Heart left ventricle (tissue), 16 donors: ENCODE measurements at regions of chr2 and their contacts with region 1.

Region 1: DNA sequence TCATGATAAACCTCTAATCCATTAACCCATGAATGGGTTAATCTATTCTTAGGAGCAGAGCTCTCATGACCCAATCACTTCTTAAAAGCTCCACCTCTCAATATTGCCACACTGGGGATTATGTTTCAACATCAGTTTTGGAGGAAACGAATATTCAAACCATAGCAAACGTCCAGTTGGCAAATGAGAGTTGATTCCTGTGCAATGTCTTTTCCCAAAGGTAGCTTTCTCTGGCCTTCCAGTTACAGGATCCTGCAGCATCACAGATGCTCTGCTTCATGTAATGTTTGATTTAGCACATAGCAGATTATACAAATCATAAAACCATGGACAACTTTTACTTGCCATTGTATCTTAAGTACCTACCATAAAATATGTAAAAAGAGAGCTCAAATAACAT is 481.0 kb downstream of the TNS1 start:
- DNase-seq: no peak
- ATAC-seq: peak in 1 of 4 donors; percentile 16
- H3K4me3 ChIP-seq: no peak overlapping the region
- H3K27ac ChIP-seq: peak overlapping the region in 1 of 12 donors; percentile 39
- H3K4me1 ChIP-seq: peaks cover 0 to 15% (median 4%) of the 10 kb centered on the region in 12 donors
- H3K27me3 ChIP-seq: no peaks in the 10 kb centered on the region
- CTCF ChIP-seq: no peak
- POLR2A ChIP-seq: no peak

Region 2: GRCh38 chr2:217636991-217637944 is 115.4 kb after region 1 on chr2:
- intact Hi-C with region 1: loop called in 1 of 10 experiments (anchors 5 kb)
- DNase-seq: no peak
- ATAC-seq: peak in 2 of 4 donors; percentile 36 to 42
- H3K4me3 ChIP-seq: no peak overlapping the region
- H3K27ac ChIP-seq: no peak overlapping the region
- H3K4me1 ChIP-seq: peaks cover 0 to 34% (median 10%) of the 10 kb centered on the region in 12 donors
- H3K27me3 ChIP-seq: no peaks in the 10 kb centered on the region
- CTCF ChIP-seq: no peak
- POLR2A ChIP-seq: no peak

Region 3: DNA sequence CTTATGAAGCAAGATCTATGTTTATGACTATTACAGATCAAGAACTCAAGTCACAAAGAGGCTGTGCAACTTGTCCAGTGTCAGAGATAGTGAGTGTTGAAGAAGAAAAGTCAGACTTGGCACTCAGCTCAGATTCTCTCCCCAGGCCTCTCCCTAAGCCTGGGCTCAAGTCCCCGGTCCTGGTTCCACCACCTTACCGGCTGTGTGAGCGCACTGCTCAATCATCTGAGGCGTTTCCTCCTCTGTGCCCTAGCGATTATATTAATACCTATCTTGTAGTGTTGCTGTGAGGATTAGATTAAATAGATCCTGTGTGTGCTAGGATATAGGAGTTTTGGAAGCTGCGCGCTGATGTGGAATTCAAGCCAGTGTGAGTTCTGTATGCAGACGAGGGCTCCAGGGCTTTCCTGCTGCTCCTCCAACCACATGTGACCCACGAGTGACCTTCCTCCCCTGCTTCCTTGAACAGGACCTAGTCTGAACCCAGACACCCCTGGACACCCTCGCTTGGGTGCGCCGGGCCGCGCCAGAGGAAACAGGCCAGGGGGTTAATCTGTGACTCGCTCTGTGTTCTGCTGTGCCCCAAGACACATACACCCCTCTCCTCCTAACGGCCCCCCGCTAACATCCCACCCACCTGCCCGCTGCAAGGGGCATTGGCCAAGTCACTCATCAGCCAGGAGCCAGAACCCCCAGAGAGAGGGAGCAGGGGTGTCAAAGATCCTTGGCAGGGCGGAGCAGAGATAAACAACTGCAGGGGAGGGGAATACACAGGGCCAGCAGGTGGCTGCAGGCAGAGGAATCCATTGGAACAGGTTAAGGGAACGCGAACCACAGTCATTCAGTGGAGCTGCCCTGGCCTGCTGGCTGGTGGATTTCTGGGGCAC is 442.7 kb after region 1 on chr2:
- intact Hi-C with region 1: no loop called
- DNase-seq: peak in 3 of 5 donors; percentile 37 to 51 (median 48)
- ATAC-seq: peak in 3 of 4 donors; percentile 49 to 55 (median 51)
- H3K4me3 ChIP-seq: peak overlapping the region in 1 of 12 donors; percentile 1
- H3K27ac ChIP-seq: peak overlapping the region; percentile 19 to 97 (median 76)
- H3K4me1 ChIP-seq: peaks cover 7 to 68% (median 48%) of the 10 kb centered on the region in 12 donors
- H3K27me3 ChIP-seq: no peaks in the 10 kb centered on the region
- CTCF ChIP-seq: no peak
- POLR2A ChIP-seq: no peak